ENCODE measurements at regions of chr11 and their contacts with region 1.

Region 1: GRCh38 chr11:15101072-15101709 is 13.5 kb upstream of the INSC start:
- DNase-seq: peak; percentile 78 to 88
- H3K4me3 ChIP-seq: no peak overlapping the region
- H3K27ac ChIP-seq: no peak overlapping the region
- H3K4me1 ChIP-seq: no peaks in the 10 kb centered on the region
- H3K27me3 ChIP-seq: peaks cover 0 to 4% (median 0%) of the 10 kb centered on the region in 3 donors
- CTCF ChIP-seq: peak in 5 of 7 experiments; percentile 78 to 93 (median 89)
- EP300 ChIP-seq: no peak
- POLR2A ChIP-seq: no peak

Region 2: GRCh38 chr11:15208378-15209222 is 107.4 kb after region 1 on chr11:
- intact Hi-C with region 1: loop called (anchors 5 kb)
- DNase-seq: peak; percentile 80 to 90
- H3K4me3 ChIP-seq: no peak overlapping the region
- H3K27ac ChIP-seq: no peak overlapping the region
- H3K4me1 ChIP-seq: peaks cover 0 to 7% (median 0%) of the 10 kb centered on the region in 4 donors
- H3K27me3 ChIP-seq: no peaks in the 10 kb centered on the region
- CTCF ChIP-seq: peak in 6 of 7 experiments; percentile 59 to 94 (median 89)
- EP300 ChIP-seq: no peak
- POLR2A ChIP-seq: no peak

Measured in stomach (tissue), 19 donors.